ENCODE measurements at regions of chr17 and their contacts with region 1.

Region 1: DNA sequence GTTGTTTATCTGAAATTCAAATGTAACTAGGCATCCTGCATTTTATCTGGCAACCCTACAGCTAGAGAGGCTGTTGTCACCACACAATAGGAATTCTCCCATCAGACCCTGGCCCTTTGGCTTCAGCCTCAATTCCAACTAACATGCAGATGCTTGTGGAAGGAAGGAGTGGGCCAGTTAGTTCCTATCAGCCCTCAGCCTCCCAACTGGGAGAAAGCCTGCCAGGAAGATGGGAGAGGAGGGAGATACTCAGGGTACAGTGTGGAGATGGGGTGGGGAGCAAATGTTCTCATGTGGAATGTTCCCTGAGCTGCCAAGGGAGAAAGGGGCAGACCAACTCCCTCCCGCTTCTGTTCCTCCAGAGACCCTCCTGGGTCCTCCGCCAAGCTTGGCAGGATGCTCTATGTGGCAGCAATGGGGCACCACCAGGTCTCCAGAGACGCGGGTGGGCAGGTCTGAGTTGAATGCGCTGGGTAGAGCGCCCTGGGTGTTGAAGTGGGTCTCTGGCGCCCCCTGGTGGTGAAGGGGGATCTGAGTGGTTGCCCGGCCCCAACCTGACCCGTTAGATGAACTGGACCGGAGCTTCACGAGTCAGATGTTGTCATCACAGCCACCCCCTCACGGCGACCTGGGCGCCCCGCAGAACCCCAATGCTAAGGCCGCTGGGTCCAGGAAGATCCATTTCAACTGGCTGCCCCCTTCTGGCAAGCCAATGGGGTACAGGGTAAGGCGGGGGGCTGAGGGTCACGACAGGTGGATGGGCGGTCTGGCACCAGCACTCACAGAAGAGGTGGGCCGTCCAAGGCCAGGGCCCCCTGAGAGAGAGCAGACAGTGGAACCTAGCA is 15.2 kb downstream of the GALK1 start:
- DNase-seq: peak; percentile 77 to 83 (median 78)
- H3K4me3 ChIP-seq: no peak overlapping the region
- H3K4me3 Mint-ChIP-seq: peak overlapping the region in 4 of 8 donors; percentile 31 to 49 (median 34)
- H3K27ac ChIP-seq: no peak overlapping the region
- H3K27ac Mint-ChIP-seq: peak overlapping the region in 3 of 7 donors; percentile 45 to 77 (median 65)
- H3K4me1 ChIP-seq: peaks cover 22% of the 10 kb centered on the region
- H3K4me1 Mint-ChIP-seq: peaks cover 10 to 30% (median 18%) of the 10 kb centered on the region in 4 donors
- H3K27me3 ChIP-seq: no peaks in the 10 kb centered on the region
- H3K27me3 Mint-ChIP-seq: peaks cover 0 to 3% of the 10 kb centered on the region in 2 donors

Region 2: GRCh38 chr17:74785096-74785980 is 964.4 kb before region 1 on chr17:
- CTCF ChIA-PET with region 1: no interaction called
- POLR2A ChIA-PET with region 1: no interaction called
- intact Hi-C with region 1: no loop called
- DNase-seq: no peak
- H3K4me3 ChIP-seq: no peak overlapping the region
- H3K4me3 Mint-ChIP-seq: peak overlapping the region in 1 of 8 donors; percentile 22
- H3K27ac ChIP-seq: no peak overlapping the region
- H3K27ac Mint-ChIP-seq: peak overlapping the region; percentile 7 to 78 (median 64)
- H3K4me1 ChIP-seq: peaks cover 37% of the 10 kb centered on the region
- H3K4me1 Mint-ChIP-seq: peaks cover 34 to 72% (median 46%) of the 10 kb centered on the region in 4 donors
- H3K27me3 ChIP-seq: no peaks in the 10 kb centered on the region
- H3K27me3 Mint-ChIP-seq: no peaks in the 10 kb centered on the region

Region 3: GRCh38 chr17:75632863-75633485 is 116.8 kb before region 1 on chr17 and contains the start of gene SMIM5:
- CTCF ChIA-PET with region 1: interaction called, 326 read pairs
- POLR2A ChIA-PET with region 1: interaction called, 6 read pairs
- intact Hi-C with region 1: loop called (anchors 1 kb)
- DNase-seq: peak; percentile 72 to 77 (median 75)
- H3K4me3 ChIP-seq: no peak within 1 kb of the TSS
- H3K4me3 Mint-ChIP-seq: peak within 1 kb of the TSS in 1 of 8 donors; percentile 26
- H3K27ac ChIP-seq: no peak within 1 kb of the TSS
- H3K27ac Mint-ChIP-seq: peak within 1 kb of the TSS in 1 of 7 donors; percentile 18
- H3K4me1 ChIP-seq: peaks cover 13% of the 10 kb centered on the region
- H3K4me1 Mint-ChIP-seq: peaks cover 2 to 13% (median 7%) of the 10 kb centered on the region in 4 donors
- H3K27me3 ChIP-seq: no peaks in the 10 kb centered on the region
- H3K27me3 Mint-ChIP-seq: no peaks in the 10 kb centered on the region
- total RNA-seq, gene SMIM5: not detected

Region 4: GRCh38 chr17:75679706-75680442 is 69.9 kb before region 1 on chr17:
- CTCF ChIA-PET with region 1: interaction called, 162 read pairs
- POLR2A ChIA-PET with region 1: interaction called, 3 read pairs
- intact Hi-C with region 1: loop called (anchors 1 kb)
- DNase-seq: no peak
- H3K4me3 ChIP-seq: no peak overlapping the region
- H3K4me3 Mint-ChIP-seq: no peak overlapping the region
- H3K27ac ChIP-seq: no peak overlapping the region
- H3K27ac Mint-ChIP-seq: peak overlapping the region in 2 of 7 donors; percentile 9 to 23
- H3K4me1 ChIP-seq: peaks cover 4% of the 10 kb centered on the region
- H3K4me1 Mint-ChIP-seq: peaks cover 14 to 27% (median 19%) of the 10 kb centered on the region in 4 donors
- H3K27me3 ChIP-seq: no peaks in the 10 kb centered on the region
- H3K27me3 Mint-ChIP-seq: no peaks in the 10 kb centered on the region

Region 5: GRCh38 chr17:75779231-75779986 is 29.6 kb after region 1 on chr17:
- CTCF ChIA-PET with region 1: interaction called, 28 read pairs
- POLR2A ChIA-PET with region 1: interaction called, 117 read pairs
- intact Hi-C with region 1: loop called (anchors 1 kb)
- DNase-seq: peak; percentile 94 to 98 (median 98)
- H3K4me3 ChIP-seq: peak overlapping the region; percentile 18 to 84
- H3K4me3 Mint-ChIP-seq: peak overlapping the region; percentile 94 to 99 (median 98)
- H3K27ac ChIP-seq: peak overlapping the region; percentile 98
- H3K27ac Mint-ChIP-seq: peak overlapping the region; percentile 96 to 100 (median 99)
- H3K4me1 ChIP-seq: peaks cover 45% of the 10 kb centered on the region
- H3K4me1 Mint-ChIP-seq: peaks cover 32 to 70% (median 47%) of the 10 kb centered on the region in 4 donors
- H3K27me3 ChIP-seq: no peaks in the 10 kb centered on the region
- H3K27me3 Mint-ChIP-seq: peaks cover 1 to 2% of the 10 kb centered on the region in 2 donors

Region 6: DNA sequence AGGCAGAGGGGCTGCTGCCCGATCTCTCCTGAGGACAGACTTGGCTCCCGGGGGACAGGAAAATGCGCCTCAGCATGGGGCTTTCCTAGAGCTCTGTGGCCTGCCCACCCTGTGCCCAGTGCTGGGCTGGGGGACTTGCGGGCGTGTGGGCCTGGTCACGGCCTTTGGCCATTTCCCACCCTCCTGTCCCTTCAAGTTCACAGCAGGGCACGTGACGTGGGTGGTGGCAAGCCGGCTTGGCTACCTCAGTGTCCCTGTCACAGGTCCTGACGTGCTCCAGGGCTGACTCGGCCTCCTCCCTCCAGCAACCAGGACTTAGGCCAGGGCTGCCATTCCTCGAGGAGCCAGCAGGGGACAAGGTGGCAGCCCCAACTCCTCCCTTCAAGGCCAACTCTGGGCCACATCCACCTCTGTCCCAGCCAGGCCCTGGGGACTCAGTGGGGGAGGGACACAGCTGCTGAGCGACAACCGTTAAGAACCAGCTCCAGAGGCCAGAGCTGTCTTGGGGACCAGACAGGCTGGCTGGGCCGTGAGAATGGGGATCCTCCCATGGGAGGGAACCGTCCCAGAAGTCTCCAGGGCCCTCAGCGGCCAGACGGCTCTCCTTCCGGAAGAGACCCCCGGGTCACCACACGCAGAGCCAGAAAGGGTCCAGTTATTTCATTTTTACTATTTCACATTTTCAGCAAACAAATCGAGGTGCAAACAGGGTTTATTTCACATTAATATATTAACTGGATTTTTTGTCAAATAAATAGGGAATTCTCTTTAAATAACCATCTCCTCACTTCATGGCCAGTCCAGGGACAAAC is 95.5 kb after region 1 on chr17:
- CTCF ChIA-PET with region 1: interaction called, 20 read pairs
- POLR2A ChIA-PET with region 1: interaction called, 16 read pairs
- intact Hi-C with region 1: loop called (anchors 1 kb)
- DNase-seq: peak; percentile 44 to 73 (median 49)
- H3K4me3 ChIP-seq: no peak overlapping the region
- H3K4me3 Mint-ChIP-seq: peak overlapping the region; percentile 25 to 50 (median 41)
- H3K27ac ChIP-seq: peak overlapping the region; percentile 90
- H3K27ac Mint-ChIP-seq: peak overlapping the region; percentile 47 to 90 (median 77)
- H3K4me1 ChIP-seq: peaks cover 49% of the 10 kb centered on the region
- H3K4me1 Mint-ChIP-seq: peaks cover 5 to 39% (median 22%) of the 10 kb centered on the region in 4 donors
- H3K27me3 ChIP-seq: no peaks in the 10 kb centered on the region
- H3K27me3 Mint-ChIP-seq: no peaks in the 10 kb centered on the region

Region 7: DNA sequence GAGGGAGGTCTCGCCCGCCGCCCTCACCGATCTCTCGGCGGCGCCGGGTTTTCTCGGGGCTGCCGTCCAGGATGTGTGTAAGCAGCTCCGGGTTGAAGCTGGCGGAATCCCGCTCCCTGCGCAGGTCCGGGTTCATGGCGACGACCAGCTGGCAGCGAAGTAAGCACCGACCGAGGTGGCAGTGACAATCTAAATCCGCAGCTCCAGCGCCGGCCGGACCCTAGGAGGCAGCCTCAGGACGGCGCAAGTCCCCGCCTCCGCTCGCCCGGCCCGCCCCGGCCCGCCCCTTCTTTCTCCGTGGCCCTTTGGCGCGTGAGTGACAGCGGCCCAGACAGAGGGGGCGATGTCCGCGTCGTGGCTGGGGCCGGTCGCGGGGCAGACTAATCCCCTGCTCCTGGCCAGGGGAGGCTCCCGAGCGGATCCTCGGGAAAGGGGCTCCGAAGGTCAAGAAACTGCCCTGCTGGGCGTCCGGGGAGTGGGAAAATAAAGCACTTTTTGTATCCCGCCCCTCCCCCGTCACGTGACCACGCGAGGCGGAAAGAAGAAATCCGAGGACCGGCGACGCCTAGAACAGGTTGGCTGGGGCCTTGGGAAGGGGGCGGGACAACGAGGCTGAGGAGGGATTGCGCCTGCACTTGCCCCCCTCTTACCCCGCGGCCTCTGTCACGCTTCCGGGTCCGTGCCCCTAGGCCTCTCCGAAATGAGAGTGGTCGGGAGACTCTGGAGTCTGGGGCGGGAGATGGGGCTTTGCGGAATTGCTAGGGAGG is 229.4 kb after region 1 on chr17 and contains the starts of genes ACOX1 and TEN1:
- CTCF ChIA-PET with region 1: no interaction called
- POLR2A ChIA-PET with region 1: no interaction called
- intact Hi-C with region 1: no loop called
- DNase-seq: peak; percentile 93 to 97 (median 95)
- H3K4me3 ChIP-seq: peak within 1 kb of the TSS; percentile 61 to 88
- H3K4me3 Mint-ChIP-seq: peak within 1 kb of the TSS; percentile 93 to 99 (median 96)
- H3K27ac ChIP-seq: peak within 1 kb of the TSS; percentile 79
- H3K27ac Mint-ChIP-seq: peak within 1 kb of the TSS; percentile 99 to 100 (median 99)
- H3K4me1 ChIP-seq: peaks cover 30% of the 10 kb centered on the region
- H3K4me1 Mint-ChIP-seq: peaks cover 18 to 57% (median 34%) of the 10 kb centered on the region in 4 donors
- H3K27me3 ChIP-seq: no peaks in the 10 kb centered on the region
- H3K27me3 Mint-ChIP-seq: no peaks in the 10 kb centered on the region
- total RNA-seq, gene ACOX1: 30.4 to 31.7 TPM
- total RNA-seq, gene TEN1: 10.2 to 16.1 TPM

Region 8: DNA sequence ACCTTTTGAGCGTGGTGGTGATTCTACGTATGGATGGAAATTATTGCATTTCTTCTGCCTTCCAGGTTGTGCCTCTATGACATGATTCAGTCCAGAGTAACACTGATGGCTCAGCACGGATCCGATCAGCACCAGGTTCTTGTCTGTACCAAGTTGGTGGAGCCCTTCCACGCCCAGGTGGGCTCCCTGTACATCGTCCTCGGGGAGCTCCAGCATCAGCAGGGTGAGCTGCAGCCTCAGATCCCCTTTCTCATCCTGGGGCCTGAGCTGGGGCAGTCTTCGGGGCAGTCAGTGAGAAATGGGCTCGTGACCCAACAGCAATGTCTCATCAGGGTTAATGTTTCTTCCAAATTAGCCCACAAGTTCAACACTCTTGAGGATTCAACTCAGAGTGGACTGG is 241.6 kb after region 1 on chr17:
- CTCF ChIA-PET with region 1: no interaction called
- POLR2A ChIA-PET with region 1: no interaction called
- intact Hi-C with region 1: no loop called
- DNase-seq: no peak
- H3K4me3 ChIP-seq: no peak overlapping the region
- H3K4me3 Mint-ChIP-seq: no peak overlapping the region
- H3K27ac ChIP-seq: no peak overlapping the region
- H3K27ac Mint-ChIP-seq: peak overlapping the region in 1 of 7 donors; percentile 57
- H3K4me1 ChIP-seq: peaks cover 1% of the 10 kb centered on the region
- H3K4me1 Mint-ChIP-seq: peaks cover 0 to 7% (median 0%) of the 10 kb centered on the region in 4 donors
- H3K27me3 ChIP-seq: no peaks in the 10 kb centered on the region
- H3K27me3 Mint-ChIP-seq: no peaks in the 10 kb centered on the region

Region 9: DNA sequence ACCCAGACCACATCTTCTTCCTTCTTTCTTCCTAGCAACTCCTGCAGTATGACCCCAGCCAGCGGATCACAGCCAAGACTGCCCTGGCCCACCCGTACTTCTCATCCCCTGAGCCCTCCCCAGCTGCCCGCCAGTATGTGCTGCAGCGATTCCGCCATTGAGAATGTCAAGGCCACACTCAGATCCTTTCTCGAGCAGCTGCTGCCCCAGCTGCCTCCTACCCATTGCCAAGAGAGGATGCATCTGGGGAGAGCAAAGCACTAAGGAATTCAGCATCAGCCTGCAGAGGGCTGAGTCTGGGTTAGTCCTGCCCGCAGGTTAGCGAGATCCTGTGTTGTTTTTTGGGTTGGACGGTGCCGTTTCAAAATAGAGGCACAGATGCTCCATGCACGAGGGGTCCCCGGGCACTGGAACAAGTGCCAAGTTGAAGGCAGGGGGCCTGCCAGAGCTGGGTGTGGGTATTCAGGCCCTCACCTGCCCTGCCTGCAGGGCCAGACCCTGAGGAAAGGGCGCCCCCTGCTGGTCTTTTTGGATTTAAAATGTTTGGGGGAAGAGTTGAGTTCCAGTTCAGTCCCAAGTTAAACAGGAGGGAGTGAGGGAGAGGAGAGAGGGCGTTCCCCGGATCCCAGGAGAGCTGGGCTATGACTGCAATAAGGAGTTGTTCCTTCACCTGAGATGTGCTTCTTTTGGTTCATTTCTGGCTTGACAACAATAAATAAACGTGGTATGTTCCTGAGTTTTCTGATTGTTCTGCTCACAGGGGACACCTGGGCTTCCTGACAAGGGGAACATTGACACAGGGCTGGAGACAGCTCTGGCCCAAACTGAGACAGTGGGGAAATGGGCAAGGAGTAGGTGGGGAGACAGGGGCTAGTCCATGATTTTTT is 255.7 kb after region 1 on chr17:
- CTCF ChIA-PET with region 1: interaction called, 11 read pairs
- POLR2A ChIA-PET with region 1: no interaction called
- intact Hi-C with region 1: loop called (anchors 5 kb)
- DNase-seq: peak; percentile 68 to 76 (median 74)
- H3K4me3 ChIP-seq: no peak overlapping the region
- H3K4me3 Mint-ChIP-seq: no peak overlapping the region
- H3K27ac ChIP-seq: no peak overlapping the region
- H3K27ac Mint-ChIP-seq: peak overlapping the region in 4 of 7 donors; percentile 2 to 59 (median 24)
- H3K4me1 ChIP-seq: no peaks in the 10 kb centered on the region
- H3K4me1 Mint-ChIP-seq: peaks cover 0 to 5% (median 3%) of the 10 kb centered on the region in 4 donors
- H3K27me3 ChIP-seq: no peaks in the 10 kb centered on the region
- H3K27me3 Mint-ChIP-seq: no peaks in the 10 kb centered on the region

Measured in CD4-positive, alpha-beta memory T cell (primary cell).